HCT116 (cell line): ENCODE measurements at regions of chr10 and their contacts with region 1.

Region 1: DNA sequence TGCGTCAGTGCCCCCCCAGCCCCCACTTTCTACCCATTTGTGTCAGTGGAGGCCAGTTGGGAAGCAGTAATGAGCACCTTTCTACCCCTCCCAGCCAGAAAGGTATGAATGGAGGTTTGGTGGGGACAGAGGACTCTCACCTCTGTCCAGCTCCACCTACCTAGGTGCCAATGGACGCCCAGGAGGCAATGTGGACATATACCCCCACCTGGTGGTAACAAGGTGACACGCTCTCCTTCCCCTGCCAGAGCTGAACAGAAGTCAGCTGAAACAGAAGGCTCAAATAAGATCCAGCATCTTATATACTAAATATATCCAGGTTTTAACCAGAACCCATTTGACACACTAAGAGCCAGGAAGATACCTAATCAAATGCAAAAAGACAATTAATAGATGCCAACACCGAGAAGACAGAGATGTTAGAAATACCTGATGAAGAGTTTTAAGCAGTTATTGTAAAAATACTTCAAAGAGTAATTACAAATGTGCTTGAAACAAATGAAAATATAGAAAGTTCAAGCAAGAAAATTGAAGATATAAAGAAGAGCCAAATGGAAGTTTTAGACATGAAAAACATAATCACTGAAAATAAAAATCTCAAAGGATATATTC is 18.4 kb upstream of the SORCS3 start:
- DNase-seq: peak; percentile 55
- ATAC-seq: peak; percentile 99
- H3K4me3 ChIP-seq: no peak overlapping the region
- H3K27ac ChIP-seq: no peak overlapping the region
- H3K4me1 ChIP-seq: no peaks in the 10 kb centered on the region
- H3K27me3 ChIP-seq: peaks cover 50% of the 10 kb centered on the region
- CTCF ChIP-seq: peak; percentile 87 to 97 (median 93)
- POLR2A ChIP-seq: no peak
- RAD21 ChIP-seq: peak; percentile 93

Region 2: GRCh38 chr10:104291439-104291951 is 331.2 kb before region 1 on chr10:
- CTCF ChIA-PET with region 1: interaction called, 6 read pairs
- POLR2A ChIA-PET with region 1: no interaction called
- RAD21 ChIA-PET with region 1: no interaction called
- intact Hi-C with region 1: loop called (anchors 5 kb)
- DNase-seq: peak; percentile 73
- ATAC-seq: peak; percentile 97
- H3K4me3 ChIP-seq: no peak overlapping the region
- H3K27ac ChIP-seq: no peak overlapping the region
- H3K4me1 ChIP-seq: peaks cover 3 to 5% of the 10 kb centered on the region in 2 experiments; a peak in 3 of 4 replicates
- H3K27me3 ChIP-seq: no peaks in the 10 kb centered on the region
- CTCF ChIP-seq: peak; percentile 100
- POLR2A ChIP-seq: no peak
- RAD21 ChIP-seq: peak; percentile 94

Region 3: GRCh38 chr10:104406715-104407650 is 215.7 kb before region 1 on chr10:
- CTCF ChIA-PET with region 1: interaction called, 67 read pairs
- POLR2A ChIA-PET with region 1: no interaction called
- RAD21 ChIA-PET with region 1: interaction called, 6 to 8 read pairs
- intact Hi-C with region 1: loop called (anchors 1 kb)
- DNase-seq: peak; percentile 57
- ATAC-seq: peak; percentile 86
- H3K4me3 ChIP-seq: no peak overlapping the region
- H3K27ac ChIP-seq: no peak overlapping the region
- H3K4me1 ChIP-seq: no peaks in the 10 kb centered on the region
- H3K27me3 ChIP-seq: peaks cover 72% of the 10 kb centered on the region
- CTCF ChIP-seq: peak; percentile 65 to 80 (median 71); a peak in 5 of 6 replicates
- POLR2A ChIP-seq: no peak
- RAD21 ChIP-seq: peak; percentile 84

Region 4: DNA sequence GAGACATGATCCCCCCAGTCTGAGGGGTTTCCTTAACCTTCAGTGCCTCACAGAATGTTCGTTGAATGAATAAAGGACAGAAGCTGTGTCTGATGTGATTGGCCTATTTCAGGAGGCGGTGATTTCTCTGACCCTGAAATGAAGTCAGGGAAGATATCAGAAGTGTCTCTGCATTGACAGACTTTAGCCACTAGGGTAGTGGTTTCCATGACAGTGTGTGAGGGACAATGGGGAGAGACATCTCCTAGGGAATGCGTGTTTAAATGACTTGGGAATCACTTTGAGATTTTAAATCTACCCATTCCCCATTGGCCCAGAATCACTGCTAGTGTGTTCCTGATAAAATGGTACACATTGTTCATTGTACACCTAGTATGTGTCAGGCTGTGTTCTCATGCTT is 137.1 kb before region 1 on chr10:
- CTCF ChIA-PET with region 1: no interaction called
- POLR2A ChIA-PET with region 1: no interaction called
- RAD21 ChIA-PET with region 1: no interaction called
- intact Hi-C with region 1: no loop called
- DNase-seq: peak; percentile 16
- ATAC-seq: peak; percentile 85
- H3K4me3 ChIP-seq: no peak overlapping the region
- H3K27ac ChIP-seq: no peak overlapping the region
- H3K4me1 ChIP-seq: no peaks in the 10 kb centered on the region
- H3K27me3 ChIP-seq: peaks cover 35% of the 10 kb centered on the region; the same call in 1 of the 2 replicates
- CTCF ChIP-seq: peak in 2 of 3 experiments; percentile 57 to 67; a peak in 4 of 6 replicates
- POLR2A ChIP-seq: no peak
- RAD21 ChIP-seq: no peak

Region 5: GRCh38 chr10:104580774-104581675 is 41.7 kb before region 1 on chr10:
- CTCF ChIA-PET with region 1: interaction called, 30 read pairs
- POLR2A ChIA-PET with region 1: no interaction called
- RAD21 ChIA-PET with region 1: interaction called, 5 to 6 read pairs
- intact Hi-C with region 1: loop called (anchors 1 kb)
- DNase-seq: peak; percentile 64
- ATAC-seq: peak; percentile 94
- H3K4me3 ChIP-seq: no peak overlapping the region
- H3K27ac ChIP-seq: no peak overlapping the region
- H3K4me1 ChIP-seq: peaks cover 0 to 4% of the 10 kb centered on the region in 2 experiments; a peak in 1 of 4 replicates
- H3K27me3 ChIP-seq: peaks cover 38% of the 10 kb centered on the region
- CTCF ChIP-seq: peak; percentile 80 to 99 (median 95)
- POLR2A ChIP-seq: no peak
- RAD21 ChIP-seq: peak; percentile 87

Region 6: DNA sequence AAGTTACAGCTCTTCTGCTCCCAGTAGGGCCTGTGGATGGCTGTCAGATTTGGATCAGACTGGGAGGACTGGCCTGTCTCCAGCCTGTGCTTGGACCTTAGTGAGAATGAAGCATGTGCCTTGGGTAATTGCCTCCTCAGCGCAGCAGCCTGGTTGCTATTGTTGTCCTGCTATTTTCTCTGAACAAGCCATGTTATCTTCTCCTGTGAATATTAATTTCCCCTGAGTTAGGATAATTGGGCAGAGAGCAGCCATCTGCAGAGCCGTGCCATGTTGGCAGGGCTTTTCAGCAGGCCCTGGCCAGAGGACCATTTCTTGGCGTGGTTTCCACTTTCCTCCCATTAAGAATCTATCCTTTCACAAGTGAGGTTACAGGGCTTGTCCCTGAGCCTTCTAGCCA is 515.7 kb after region 1 on chr10:
- CTCF ChIA-PET with region 1: no interaction called
- POLR2A ChIA-PET with region 1: no interaction called
- RAD21 ChIA-PET with region 1: no interaction called
- intact Hi-C with region 1: no loop called
- DNase-seq: no peak
- ATAC-seq: no peak
- H3K4me3 ChIP-seq: no peak overlapping the region
- H3K27ac ChIP-seq: no peak overlapping the region
- H3K4me1 ChIP-seq: no peaks in the 10 kb centered on the region
- H3K27me3 ChIP-seq: no peaks in the 10 kb centered on the region
- CTCF ChIP-seq: no peak
- POLR2A ChIP-seq: no peak
- RAD21 ChIP-seq: no peak